Left ventricle myocardium inferior (tissue), 1 donor: ENCODE measurements at regions of chr3 and their contacts with region 1.

Region 1: DNA sequence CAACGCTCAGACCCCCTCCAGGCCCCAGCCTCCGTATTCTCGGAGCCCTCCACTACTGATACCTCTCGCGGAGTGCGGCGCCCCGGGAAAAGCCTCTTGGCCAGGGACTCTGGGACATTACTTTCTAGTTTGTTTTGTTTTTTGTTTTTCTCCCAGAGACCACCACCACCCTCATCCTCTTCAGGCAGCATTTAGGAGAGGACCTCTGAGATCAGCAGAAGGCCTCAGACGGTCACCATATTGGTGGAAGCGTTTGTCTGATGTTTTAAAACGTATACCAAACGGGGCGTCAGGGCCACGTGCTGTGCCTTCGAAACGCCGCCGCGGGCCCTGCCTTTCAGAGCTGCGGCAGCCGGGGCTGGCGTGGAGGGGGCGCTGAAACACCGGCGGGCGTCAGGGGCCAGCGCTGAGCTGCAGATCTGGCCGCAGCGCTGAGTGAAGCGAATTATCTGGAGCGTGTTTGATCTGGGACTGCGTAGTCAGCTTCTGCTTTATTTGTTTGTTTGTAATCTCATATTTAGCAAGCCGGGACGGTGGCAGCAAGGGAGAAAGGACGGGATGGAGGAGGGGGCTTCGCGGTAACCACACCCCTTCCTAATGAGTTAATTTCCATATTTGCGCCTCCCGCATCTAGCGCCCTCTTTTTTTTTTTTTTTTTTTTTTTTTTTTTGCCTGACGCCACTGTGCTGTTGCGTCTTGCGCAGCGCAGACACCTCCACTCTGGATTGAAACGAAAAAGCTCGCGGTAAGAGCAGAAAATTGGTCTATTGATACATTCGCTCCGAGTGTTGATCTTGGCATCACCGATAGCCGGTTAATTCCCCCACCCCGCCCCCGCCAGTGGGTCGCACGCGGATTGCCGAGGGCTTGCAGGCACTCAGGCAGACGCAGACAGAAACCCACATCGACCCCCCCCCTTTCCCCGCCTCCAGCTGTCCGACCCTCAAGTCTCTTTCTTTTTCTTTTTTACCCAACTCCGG is 14.9 kb downstream of the SOX2 start:
- DNase-seq: no peak
- H3K4me3 ChIP-seq: peak overlapping the region; percentile 51
- H3K27ac ChIP-seq: no peak overlapping the region
- H3K4me1 ChIP-seq: peaks cover 22% of the 10 kb centered on the region
- H3K27me3 ChIP-seq: peaks cover 100% of the 10 kb centered on the region
- CTCF ChIP-seq: no peak

Region 2: GRCh38 chr3:180802837-180803236 is 923.8 kb before region 1 on chr3:
- intact Hi-C with region 1: loop called (anchors 10 kb)
- DNase-seq: no peak
- H3K4me3 ChIP-seq: no peak overlapping the region
- H3K27ac ChIP-seq: no peak overlapping the region
- H3K4me1 ChIP-seq: peaks cover 5% of the 10 kb centered on the region
- H3K27me3 ChIP-seq: no peaks in the 10 kb centered on the region
- CTCF ChIP-seq: peak; percentile 67

Region 3: DNA sequence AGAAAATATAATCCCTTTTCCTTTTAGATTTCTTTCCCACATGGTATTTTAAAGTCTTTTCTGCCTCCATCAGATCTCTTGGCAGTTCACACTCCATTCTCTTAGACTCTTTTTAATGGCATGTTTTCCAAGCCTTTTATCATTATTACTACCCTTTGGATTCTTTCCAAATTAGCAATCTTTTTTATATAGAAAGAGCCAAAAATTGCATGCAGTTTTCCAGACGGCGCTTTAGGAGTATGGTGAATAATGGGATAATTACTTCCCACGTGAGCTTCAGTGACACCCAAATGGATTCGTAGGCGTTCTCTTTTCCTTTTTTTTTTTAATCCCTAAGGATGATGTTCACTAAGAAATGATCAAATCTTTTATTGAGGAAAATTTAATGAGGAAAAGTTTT is 382.3 kb before region 1 on chr3:
- intact Hi-C with region 1: no loop called
- DNase-seq: no peak
- H3K4me3 ChIP-seq: no peak overlapping the region
- H3K27ac ChIP-seq: no peak overlapping the region
- H3K4me1 ChIP-seq: no peaks in the 10 kb centered on the region
- H3K27me3 ChIP-seq: no peaks in the 10 kb centered on the region
- CTCF ChIP-seq: no peak